GM12878 (cell line): ENCODE measurements at regions of chr2 and their contacts with region 1.

Region 1: GRCh38 chr2:70964596-70965386 is 13.6 kb upstream of the ANKRD53 start:
- DNase-seq: no peak
- ATAC-seq: peak; percentile 97
- H3K4me3 ChIP-seq: peak overlapping the region; percentile 74
- H3K27ac ChIP-seq: no peak overlapping the region
- H3K4me1 ChIP-seq: no peaks in the 10 kb centered on the region
- H3K27me3 ChIP-seq: peaks cover 0 to 3% of the 10 kb centered on the region in 2 experiments; a peak in 1 of 4 replicates
- CTCF ChIP-seq: peak; percentile 75 to 87 (median 85)
- EP300 ChIP-seq: no peak
- POLR2A ChIP-seq: no peak
- RAD21 ChIP-seq: peak; percentile 64

Region 2: GRCh38 chr2:69933839-69934613 is 1030.8 kb before region 1 on chr2:
- CTCF ChIA-PET with region 1: no interaction called
- POLR2A ChIA-PET with region 1: no interaction called
- RAD21 ChIA-PET with region 1: no interaction called
- SMC1A ChIA-PET with region 1: no interaction called
- in situ Hi-C with region 1: no loop called
- intact Hi-C with region 1: no loop called
- DNase-seq: no peak
- ATAC-seq: peak; percentile 52
- H3K4me3 ChIP-seq: no peak overlapping the region
- H3K27ac ChIP-seq: no peak overlapping the region
- H3K4me1 ChIP-seq: peaks cover 17% of the 10 kb centered on the region
- H3K27me3 ChIP-seq: no peaks in the 10 kb centered on the region
- CTCF ChIP-seq: no peak
- EP300 ChIP-seq: no peak
- POLR2A ChIP-seq: no peak
- RAD21 ChIP-seq: no peak

Region 3: GRCh38 chr2:70977605-70978205 is 12.9 kb after region 1 on chr2:
- CTCF ChIA-PET with region 1: interaction called, 72 read pairs
- POLR2A ChIA-PET with region 1: no interaction called
- RAD21 ChIA-PET with region 1: interaction called, 4 read pairs
- SMC1A ChIA-PET with region 1: interaction called, 9 read pairs
- in situ Hi-C with region 1: no loop called
- intact Hi-C with region 1: no loop called
- DNase-seq: no peak
- ATAC-seq: peak; percentile 25; the same call in 2 of the 3 replicates
- H3K4me3 ChIP-seq: peak overlapping the region; percentile 74; the same call in 1 of the 2 replicates
- H3K27ac ChIP-seq: no peak overlapping the region
- H3K4me1 ChIP-seq: peaks cover 7% of the 10 kb centered on the region
- H3K27me3 ChIP-seq: no peaks in the 10 kb centered on the region
- CTCF ChIP-seq: no peak
- EP300 ChIP-seq: no peak
- POLR2A ChIP-seq: no peak
- RAD21 ChIP-seq: no peak

Region 4: DNA sequence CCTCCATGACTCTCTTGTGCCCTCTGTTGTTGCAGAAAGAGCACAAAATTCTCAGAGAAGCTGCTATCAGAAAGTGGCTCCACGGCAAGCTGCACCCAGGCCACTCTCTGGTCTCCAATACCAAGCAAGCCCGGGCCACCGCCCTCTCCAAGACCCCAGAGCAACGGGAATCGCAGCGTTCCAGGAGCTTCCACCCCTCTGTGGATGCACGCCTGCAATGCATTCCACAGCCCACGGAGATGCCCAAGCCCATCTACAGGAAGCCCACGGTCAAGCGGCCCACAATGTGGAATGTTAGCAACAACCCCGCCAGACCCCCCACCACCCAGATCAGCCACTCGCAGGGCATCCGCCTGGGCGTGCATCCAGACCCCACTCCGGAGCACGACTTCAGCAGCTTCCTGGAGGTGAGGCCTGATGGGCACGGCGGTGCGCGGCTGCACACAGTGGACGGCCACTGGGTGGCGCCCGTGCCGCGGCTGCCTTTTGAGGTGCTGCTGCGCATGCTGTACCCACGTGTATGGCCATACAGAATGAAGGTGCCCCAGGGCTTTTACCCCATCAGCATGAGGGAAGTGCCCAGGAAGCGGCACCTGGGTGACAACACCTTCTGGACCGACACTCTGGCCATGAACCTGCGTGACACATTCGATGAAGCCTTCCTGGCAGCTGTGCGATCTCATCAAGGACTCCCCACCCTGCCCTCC is 19.9 kb after region 1 on chr2:
- CTCF ChIA-PET with region 1: interaction called, 10 read pairs
- POLR2A ChIA-PET with region 1: no interaction called
- RAD21 ChIA-PET with region 1: no interaction called
- SMC1A ChIA-PET with region 1: interaction called, 5 read pairs
- in situ Hi-C with region 1: no loop called
- intact Hi-C with region 1: no loop called
- DNase-seq: no peak
- ATAC-seq: peak; percentile 99
- H3K4me3 ChIP-seq: no peak overlapping the region
- H3K27ac ChIP-seq: no peak overlapping the region
- H3K4me1 ChIP-seq: no peaks in the 10 kb centered on the region
- H3K27me3 ChIP-seq: no peaks in the 10 kb centered on the region
- CTCF ChIP-seq: peak; percentile 74 to 90 (median 85)
- EP300 ChIP-seq: no peak
- POLR2A ChIP-seq: peak; percentile 47
- RAD21 ChIP-seq: peak; percentile 52

Region 5: GRCh38 chr2:71000780-71001591 is 36.2 kb after region 1 on chr2:
- CTCF ChIA-PET with region 1: interaction called, 30 read pairs
- POLR2A ChIA-PET with region 1: interaction called, 3 read pairs
- RAD21 ChIA-PET with region 1: no interaction called
- SMC1A ChIA-PET with region 1: interaction called, 5 read pairs
- in situ Hi-C with region 1: no loop called
- intact Hi-C with region 1: no loop called
- DNase-seq: no peak
- ATAC-seq: peak; percentile 98
- H3K4me3 ChIP-seq: peak overlapping the region; percentile 66
- H3K27ac ChIP-seq: peak overlapping the region; percentile 48; the same call in 1 of the 2 replicates
- H3K4me1 ChIP-seq: peaks cover 9% of the 10 kb centered on the region
- H3K27me3 ChIP-seq: no peaks in the 10 kb centered on the region
- CTCF ChIP-seq: peak; percentile 88 to 93 (median 91)
- EP300 ChIP-seq: no peak
- POLR2A ChIP-seq: peak; percentile 60
- RAD21 ChIP-seq: peak; percentile 48